Naive thymus-derived CD4-positive, alpha-beta T cell (primary cell): ENCODE measurements at regions of chr19 and their contacts with region 1.

Region 1: GRCh38 chr19:12484371-12485051 is at the start of gene ZNF709:
- DNase-seq: peak; percentile 75 to 89 (median 85)
- ATAC-seq: peak; percentile 99
- H3K4me3 ChIP-seq: peak within 1 kb of the TSS; percentile 98
- H3K4me3 Mint-ChIP-seq: peak within 1 kb of the TSS; percentile 90 to 99 (median 94)
- H3K27ac ChIP-seq: peak within 1 kb of the TSS; percentile 85
- H3K27ac Mint-ChIP-seq: peak within 1 kb of the TSS; percentile 87 to 97 (median 91)
- H3K4me1 ChIP-seq: peaks cover 0 to 14% of the 10 kb centered on the region in 2 donors
- H3K4me1 Mint-ChIP-seq: peaks cover 26 to 41% (median 33%) of the 10 kb centered on the region in 7 donors
- H3K27me3 ChIP-seq: no peaks in the 10 kb centered on the region
- H3K27me3 Mint-ChIP-seq: no peaks in the 10 kb centered on the region
- total RNA-seq, gene ZNF709: 2.2 to 8.0 (median 5.3) TPM

Region 2: DNA sequence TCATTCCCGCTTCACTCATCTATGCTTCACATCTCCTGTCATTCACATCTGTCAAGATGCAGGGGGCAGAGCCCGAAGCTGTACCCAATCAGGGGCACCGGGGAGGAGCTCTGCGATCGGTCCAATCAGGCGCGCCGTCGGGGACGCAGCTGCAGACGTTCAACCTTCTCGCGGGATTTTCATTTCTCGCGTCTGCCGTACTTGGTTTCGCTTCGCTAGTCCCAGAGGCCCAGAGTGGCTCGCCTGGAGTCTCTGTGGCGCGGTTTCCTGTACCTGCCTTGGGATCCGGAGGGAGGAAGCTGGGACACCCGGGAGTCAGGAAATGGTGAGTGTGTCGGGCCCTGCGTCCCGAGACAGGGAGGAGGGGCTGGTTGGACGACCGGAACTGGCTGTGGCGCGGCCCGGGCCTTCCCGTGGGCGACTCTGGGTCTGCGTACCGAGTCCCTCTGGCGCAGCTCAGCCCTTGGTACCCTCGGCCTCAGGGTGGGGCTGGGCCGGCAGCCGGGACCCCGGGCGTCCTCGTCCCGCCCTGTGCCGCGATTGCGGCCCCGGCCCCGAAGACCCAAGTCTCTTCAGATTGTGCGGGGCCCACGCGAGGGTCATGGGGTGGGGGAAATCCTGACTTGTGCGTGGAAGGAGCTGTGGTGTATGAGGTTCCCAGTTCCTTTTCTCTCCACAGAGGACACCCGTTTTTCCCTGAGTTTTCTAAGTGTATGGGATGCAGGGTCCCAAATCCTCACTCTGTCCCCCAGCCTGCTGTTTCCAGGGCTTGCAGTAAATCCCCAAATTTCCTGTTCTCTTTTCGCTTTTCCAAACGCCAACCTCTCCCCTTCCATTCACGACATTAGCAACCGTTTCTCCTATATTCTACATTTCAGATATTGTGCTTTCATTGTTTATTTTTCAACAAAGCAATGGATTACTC is 321.4 kb before region 1 on chr19 and contains the start of gene ZNF136:
- CTCF ChIA-PET with region 1: no interaction called
- POLR2A ChIA-PET with region 1: interaction called, 4 read pairs
- intact Hi-C with region 1: loop called in 1 of 2 experiments (anchors 2 kb)
- DNase-seq: peak; percentile 77 to 95 (median 91)
- ATAC-seq: peak; percentile 99
- H3K4me3 ChIP-seq: peak within 1 kb of the TSS; percentile 78
- H3K4me3 Mint-ChIP-seq: peak within 1 kb of the TSS; percentile 88 to 100 (median 98)
- H3K27ac ChIP-seq: peak within 1 kb of the TSS; percentile 96
- H3K27ac Mint-ChIP-seq: peak within 1 kb of the TSS; percentile 88 to 100 (median 98)
- H3K4me1 ChIP-seq: peaks cover 7 to 15% of the 10 kb centered on the region in 2 donors
- H3K4me1 Mint-ChIP-seq: peaks cover 28 to 64% (median 46%) of the 10 kb centered on the region in 7 donors
- H3K27me3 ChIP-seq: no peaks in the 10 kb centered on the region
- H3K27me3 Mint-ChIP-seq: no peaks in the 10 kb centered on the region
- total RNA-seq, gene ZNF136: 16.8 to 36.8 (median 31.1) TPM

Region 3: DNA sequence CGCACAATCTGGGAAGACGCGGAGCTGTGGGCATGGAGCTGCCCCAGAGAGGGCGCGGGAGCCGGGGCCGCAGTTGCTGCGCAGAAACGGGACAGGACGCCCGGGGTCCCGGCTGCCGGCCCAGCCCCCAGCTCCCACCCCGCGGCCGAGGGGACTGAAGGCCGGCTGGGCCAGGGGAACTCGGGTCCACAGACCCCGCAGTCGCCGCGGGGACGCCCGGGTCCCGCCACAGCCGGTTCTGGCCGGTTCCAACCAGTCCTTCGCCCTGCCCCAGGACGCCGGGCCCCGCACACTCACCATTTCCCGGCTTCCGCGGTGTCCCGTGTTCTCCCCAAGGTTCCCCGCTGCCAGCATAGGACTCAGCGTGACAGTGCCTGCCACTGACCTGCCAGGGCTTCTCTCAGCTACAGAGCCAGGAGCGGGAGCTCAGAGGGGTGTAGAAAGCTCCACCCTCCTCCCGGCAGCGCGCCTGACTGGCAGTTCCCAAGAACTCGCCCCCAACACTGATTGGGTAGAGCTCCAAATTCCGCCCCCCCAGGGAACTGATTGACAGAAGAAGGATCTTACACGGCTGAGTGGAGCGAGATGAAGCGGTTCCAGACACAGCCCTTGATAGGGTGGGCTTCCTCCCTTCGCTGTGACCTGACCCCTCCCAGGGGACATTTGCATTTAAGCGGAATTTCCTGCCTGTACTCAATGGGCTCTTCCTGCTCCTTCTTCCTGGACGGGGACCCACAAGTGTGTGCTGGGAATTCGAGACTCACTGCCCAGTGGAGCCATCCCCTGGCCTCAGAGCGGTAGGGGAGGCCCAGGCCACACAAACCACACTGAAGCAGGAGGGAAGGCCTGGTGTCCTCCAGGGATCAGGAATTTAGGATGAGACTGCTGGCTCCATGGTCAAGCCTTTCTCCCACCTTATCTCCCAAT is 119.0 kb before region 1 on chr19 and contains the start of gene ZNF442:
- CTCF ChIA-PET with region 1: no interaction called
- POLR2A ChIA-PET with region 1: interaction called, 3 read pairs
- intact Hi-C with region 1: loop called in 1 of 2 experiments (anchors 1 kb)
- DNase-seq: peak; percentile 56 to 88 (median 80)
- ATAC-seq: peak; percentile 99
- H3K4me3 ChIP-seq: peak within 1 kb of the TSS; percentile 66
- H3K4me3 Mint-ChIP-seq: peak within 1 kb of the TSS; percentile 92 to 99 (median 97)
- H3K27ac ChIP-seq: peak within 1 kb of the TSS; percentile 68
- H3K27ac Mint-ChIP-seq: peak within 1 kb of the TSS; percentile 68 to 91 (median 85)
- H3K4me1 ChIP-seq: peaks cover 7 to 10% of the 10 kb centered on the region in 2 donors
- H3K4me1 Mint-ChIP-seq: peaks cover 0 to 33% (median 24%) of the 10 kb centered on the region in 7 donors
- H3K27me3 ChIP-seq: no peaks in the 10 kb centered on the region
- H3K27me3 Mint-ChIP-seq: peaks cover 0 to 10% (median 0%) of the 10 kb centered on the region in 5 donors
- total RNA-seq, gene ZNF442: 0.44 to 6.0 (median 0.58) TPM

Region 4: DNA sequence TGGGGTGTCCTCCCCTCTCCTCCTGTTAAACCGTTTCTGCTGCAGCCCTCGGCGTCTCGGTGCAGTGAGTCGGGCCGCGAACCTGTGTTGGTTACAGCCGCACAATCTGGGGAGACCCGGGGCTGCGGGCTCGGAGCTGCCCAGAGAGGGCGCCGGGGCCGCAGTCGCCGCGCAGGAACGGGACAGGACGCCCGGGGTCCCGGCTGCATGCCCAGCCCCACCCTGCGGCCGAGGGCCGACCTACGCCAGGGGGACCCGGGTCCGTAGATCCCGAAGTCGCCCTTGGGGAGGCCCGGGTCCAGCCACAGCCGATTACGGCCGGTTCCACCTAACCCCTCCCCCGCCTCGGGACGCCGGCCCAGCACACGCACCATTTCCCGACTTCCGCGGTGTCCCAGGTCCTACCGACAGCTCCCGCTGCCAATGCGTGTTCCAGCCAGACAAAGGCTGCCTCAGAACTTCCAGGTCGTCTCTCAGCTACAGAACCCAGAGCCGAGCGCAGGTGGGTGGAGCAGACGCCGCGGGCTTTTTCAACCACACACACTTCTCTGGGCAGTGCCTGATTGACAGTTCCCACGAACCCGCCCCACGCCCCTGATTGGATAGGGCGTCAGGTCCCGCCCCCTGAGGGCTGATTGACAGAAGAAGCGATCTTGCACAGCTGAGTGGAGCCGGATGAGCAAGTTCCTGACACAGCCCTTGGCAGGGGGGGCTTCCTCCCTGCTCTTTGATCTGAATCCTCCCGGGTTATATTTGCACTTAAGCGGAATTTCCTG is 43.8 kb before region 1 on chr19 and contains the start of gene ZNF443:
- CTCF ChIA-PET with region 1: no interaction called
- POLR2A ChIA-PET with region 1: interaction called, 3 read pairs
- intact Hi-C with region 1: loop called (anchors 1 to 2 kb)
- DNase-seq: peak; percentile 93 to 99 (median 98)
- ATAC-seq: peak; percentile 99
- H3K4me3 ChIP-seq: peak within 1 kb of the TSS; percentile 80
- H3K4me3 Mint-ChIP-seq: peak within 1 kb of the TSS; percentile 97 to 100 (median 100)
- H3K27ac ChIP-seq: peak within 1 kb of the TSS; percentile 72
- H3K27ac Mint-ChIP-seq: peak within 1 kb of the TSS; percentile 84 to 99 (median 96)
- H3K4me1 ChIP-seq: no peaks in the 10 kb centered on the region
- H3K4me1 Mint-ChIP-seq: peaks cover 12 to 34% (median 24%) of the 10 kb centered on the region in 7 donors
- H3K27me3 ChIP-seq: no peaks in the 10 kb centered on the region
- H3K27me3 Mint-ChIP-seq: no peaks in the 10 kb centered on the region
- total RNA-seq, gene ZNF443: 3.0 to 9.1 (median 4.1) TPM

Region 5: DNA sequence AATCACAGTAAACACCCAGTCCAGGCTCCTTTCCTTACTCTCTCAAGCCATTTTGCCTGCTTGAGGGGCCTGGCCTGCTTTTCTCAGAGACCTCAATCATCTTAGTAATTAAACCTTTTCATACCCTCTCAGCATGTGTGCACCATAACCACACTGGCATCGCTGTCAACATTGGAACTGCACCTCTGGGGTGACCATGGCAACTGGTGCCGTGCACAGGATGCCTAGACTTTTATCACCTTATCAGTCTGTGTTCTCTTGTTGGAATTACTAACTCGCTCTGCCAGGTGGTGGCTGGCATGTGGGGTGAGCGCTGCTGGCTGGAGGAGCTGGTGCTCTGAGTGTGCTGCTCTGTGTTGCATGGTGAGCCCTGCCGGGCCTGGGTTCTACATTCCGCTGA is 17.6 kb after region 1 on chr19:
- CTCF ChIA-PET with region 1: no interaction called
- POLR2A ChIA-PET with region 1: no interaction called
- intact Hi-C with region 1: no loop called
- DNase-seq: peak in 1 of 9 donors; percentile 25
- ATAC-seq: peak; percentile 31
- H3K4me3 ChIP-seq: no peak overlapping the region
- H3K4me3 Mint-ChIP-seq: peak overlapping the region in 1 of 10 donors; percentile 18
- H3K27ac ChIP-seq: no peak overlapping the region
- H3K27ac Mint-ChIP-seq: peak overlapping the region in 1 of 9 donors; percentile 32
- H3K4me1 ChIP-seq: no peaks in the 10 kb centered on the region
- H3K4me1 Mint-ChIP-seq: no peaks in the 10 kb centered on the region
- H3K27me3 ChIP-seq: no peaks in the 10 kb centered on the region
- H3K27me3 Mint-ChIP-seq: no peaks in the 10 kb centered on the region

Region 6: GRCh38 chr19:12513531-12514061 is 29.1 kb after region 1 on chr19:
- CTCF ChIA-PET with region 1: no interaction called
- POLR2A ChIA-PET with region 1: no interaction called
- intact Hi-C with region 1: no loop called
- DNase-seq: no peak
- ATAC-seq: no peak
- H3K4me3 ChIP-seq: no peak overlapping the region
- H3K4me3 Mint-ChIP-seq: no peak overlapping the region
- H3K27ac ChIP-seq: no peak overlapping the region
- H3K27ac Mint-ChIP-seq: no peak overlapping the region
- H3K4me1 ChIP-seq: no peaks in the 10 kb centered on the region
- H3K4me1 Mint-ChIP-seq: peaks cover 0 to 4% (median 0%) of the 10 kb centered on the region in 7 donors
- H3K27me3 ChIP-seq: no peaks in the 10 kb centered on the region
- H3K27me3 Mint-ChIP-seq: peaks cover 0 to 13% (median 10%) of the 10 kb centered on the region in 5 donors

Region 7: DNA sequence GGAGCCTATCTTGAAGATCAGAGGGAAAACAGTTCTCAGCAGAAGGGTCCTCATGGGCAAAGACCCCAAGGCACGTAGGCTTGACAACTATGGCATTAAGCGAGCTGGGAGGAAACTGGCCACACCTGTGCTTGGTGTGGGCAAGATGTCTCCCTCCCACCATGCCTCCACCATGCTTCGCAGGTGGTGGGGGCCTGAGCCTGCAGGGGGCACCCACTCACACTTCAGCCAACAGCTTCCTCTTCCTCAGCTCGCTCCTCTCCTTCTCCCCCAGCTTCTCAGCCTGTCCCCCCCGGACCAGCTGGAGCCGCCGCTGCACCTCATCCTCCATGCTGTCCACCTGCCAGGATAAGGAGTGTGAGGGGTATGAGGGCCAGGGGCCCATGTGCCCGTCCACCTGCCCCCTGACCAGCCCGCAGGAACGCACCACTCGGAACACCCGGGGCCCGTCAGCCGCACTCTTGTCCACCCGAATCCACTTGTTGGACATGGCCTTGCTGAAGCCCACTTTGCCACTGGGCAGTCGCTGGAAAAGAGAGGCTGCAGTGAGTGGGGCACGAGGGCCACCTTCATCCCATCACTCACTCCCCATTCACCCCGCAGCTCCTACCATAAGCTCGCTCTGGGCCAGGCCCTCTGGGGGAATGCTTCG is 445.6 kb after region 1 on chr19:
- CTCF ChIA-PET with region 1: no interaction called
- POLR2A ChIA-PET with region 1: no interaction called
- intact Hi-C with region 1: no loop called
- DNase-seq: no peak
- ATAC-seq: no peak
- H3K4me3 ChIP-seq: no peak overlapping the region
- H3K4me3 Mint-ChIP-seq: no peak overlapping the region
- H3K27ac ChIP-seq: no peak overlapping the region
- H3K27ac Mint-ChIP-seq: no peak overlapping the region
- H3K4me1 ChIP-seq: peaks cover 14% of the 10 kb centered on the region in 2 donors
- H3K4me1 Mint-ChIP-seq: peaks cover 16 to 34% (median 26%) of the 10 kb centered on the region in 7 donors
- H3K27me3 ChIP-seq: no peaks in the 10 kb centered on the region
- H3K27me3 Mint-ChIP-seq: no peaks in the 10 kb centered on the region